ENCODE measurements at regions of chr2 and their contacts with region 1.

Region 1: GRCh38 chr2:190904640-190905261 is 24.1 kb downstream of the GLS start:
- DNase-seq: no peak
- H3K4me3 Mint-ChIP-seq: no peak overlapping the region
- H3K27ac Mint-ChIP-seq: no peak overlapping the region
- H3K4me1 Mint-ChIP-seq: peaks cover 34% of the 10 kb centered on the region
- H3K27me3 Mint-ChIP-seq: no peaks in the 10 kb centered on the region

Region 2: GRCh38 chr2:190887089-190887488 is 17.7 kb before region 1 on chr2:
- CTCF ChIA-PET with region 1: interaction called, 3 read pairs
- intact Hi-C with region 1: loop called (anchors 1 kb)
- DNase-seq: no peak
- H3K4me3 Mint-ChIP-seq: no peak overlapping the region
- H3K27ac Mint-ChIP-seq: no peak overlapping the region
- H3K4me1 Mint-ChIP-seq: peaks cover 66% of the 10 kb centered on the region
- H3K27me3 Mint-ChIP-seq: no peaks in the 10 kb centered on the region

Region 3: DNA sequence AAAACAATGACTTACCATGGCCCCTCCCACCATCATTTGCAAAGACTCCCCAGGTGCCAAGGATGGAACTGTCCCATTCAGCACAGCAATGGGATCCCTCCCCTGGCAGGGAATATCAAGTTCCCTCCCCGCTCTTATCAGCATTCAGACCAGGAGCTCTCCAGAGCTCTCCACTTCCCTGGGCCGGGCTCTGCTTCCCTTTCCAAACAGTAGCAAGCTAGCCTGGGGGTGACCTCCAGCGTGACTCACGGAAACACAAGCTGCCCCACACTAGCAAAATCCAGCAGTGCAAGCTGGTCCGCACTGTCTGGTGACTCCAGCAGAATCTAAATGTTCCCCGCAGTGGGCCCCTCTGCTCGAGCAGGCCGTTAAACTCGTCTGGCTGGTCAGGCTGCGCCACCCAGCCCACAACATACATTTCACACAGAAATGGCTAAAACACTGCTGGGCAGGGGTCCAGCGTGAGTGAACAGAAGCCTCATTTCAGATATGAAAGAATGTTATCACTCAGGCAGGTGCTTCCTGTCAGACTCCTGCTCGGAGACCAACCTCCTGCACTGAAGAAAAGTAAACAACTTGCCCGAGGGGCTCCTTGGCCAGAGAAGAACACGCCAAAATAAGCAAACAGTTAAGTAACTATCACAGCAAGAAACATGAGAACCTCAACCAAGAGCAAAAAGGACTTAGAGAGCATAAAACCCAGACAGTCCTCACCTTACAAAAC is 75.3 kb after region 1 on chr2:
- CTCF ChIA-PET with region 1: no interaction called
- intact Hi-C with region 1: loop called (anchors 5 kb)
- DNase-seq: no peak
- H3K4me3 Mint-ChIP-seq: no peak overlapping the region
- H3K27ac Mint-ChIP-seq: peak overlapping the region; percentile 73
- H3K4me1 Mint-ChIP-seq: peaks cover 58% of the 10 kb centered on the region
- H3K27me3 Mint-ChIP-seq: no peaks in the 10 kb centered on the region